SK-N-SH (cell line): ENCODE measurements at regions of chr20 and their contacts with region 1.

Region 1: GRCh38 chr20:60365056-60365666 is 406.9 kb downstream of the CDH26 start:
- DNase-seq: peak; percentile 54
- H3K4me3 ChIP-seq: no peak overlapping the region
- H3K27ac ChIP-seq: peak overlapping the region in 1 of 2 experiments; percentile 74; a peak in 2 of 4 replicates
- H3K4me1 ChIP-seq: peaks cover 0 to 17% of the 10 kb centered on the region in 2 experiments; a peak in 2 of 4 replicates
- H3K27me3 ChIP-seq: no peaks in the 10 kb centered on the region
- CTCF ChIP-seq: no peak
- EP300 ChIP-seq: no peak
- RAD21 ChIP-seq: peak; percentile 73

Region 2: DNA sequence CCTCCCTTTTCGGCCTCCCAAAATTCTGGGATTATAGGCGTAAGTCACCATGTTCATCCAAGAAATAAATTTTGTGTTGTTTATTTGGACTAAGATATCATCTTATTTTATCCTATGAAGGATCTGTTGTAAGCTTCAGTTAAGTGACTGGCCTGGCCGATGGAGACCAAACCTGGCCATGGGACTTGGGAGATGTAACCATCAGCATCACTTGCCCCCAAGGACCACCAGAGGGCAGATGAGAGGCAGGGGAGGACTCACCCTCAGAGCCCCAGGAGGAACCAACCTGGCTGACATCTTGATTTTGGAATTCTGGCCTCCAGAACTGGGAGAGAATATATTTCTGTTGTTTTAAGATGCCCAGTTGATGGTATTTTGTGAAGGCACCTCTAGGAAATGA is 140.2 kb before region 1 on chr20:
- CTCF ChIA-PET with region 1: interaction called, 17 read pairs
- POLR2A ChIA-PET with region 1: no interaction called
- DNase-seq: peak; percentile 52
- H3K4me3 ChIP-seq: no peak overlapping the region
- H3K27ac ChIP-seq: no peak overlapping the region
- H3K4me1 ChIP-seq: no peaks in the 10 kb centered on the region
- H3K27me3 ChIP-seq: no peaks in the 10 kb centered on the region
- CTCF ChIP-seq: 0 out of 2 replicates have a peak, but pooled peaks have one; percentile 19
- EP300 ChIP-seq: no peak
- RAD21 ChIP-seq: peak; percentile 61